ENCODE measurements at regions of chr9 and their contacts with region 1.

Region 1: GRCh38 chr9:27785714-27786100 is 212.4 kb upstream of the C9orf72 start:
- H3K4me3 Mint-ChIP-seq: no peak overlapping the region
- H3K27ac Mint-ChIP-seq: no peak overlapping the region
- H3K4me1 Mint-ChIP-seq: peaks cover 7% of the 10 kb centered on the region
- H3K27me3 Mint-ChIP-seq: peaks cover 11% of the 10 kb centered on the region

Region 2: DNA sequence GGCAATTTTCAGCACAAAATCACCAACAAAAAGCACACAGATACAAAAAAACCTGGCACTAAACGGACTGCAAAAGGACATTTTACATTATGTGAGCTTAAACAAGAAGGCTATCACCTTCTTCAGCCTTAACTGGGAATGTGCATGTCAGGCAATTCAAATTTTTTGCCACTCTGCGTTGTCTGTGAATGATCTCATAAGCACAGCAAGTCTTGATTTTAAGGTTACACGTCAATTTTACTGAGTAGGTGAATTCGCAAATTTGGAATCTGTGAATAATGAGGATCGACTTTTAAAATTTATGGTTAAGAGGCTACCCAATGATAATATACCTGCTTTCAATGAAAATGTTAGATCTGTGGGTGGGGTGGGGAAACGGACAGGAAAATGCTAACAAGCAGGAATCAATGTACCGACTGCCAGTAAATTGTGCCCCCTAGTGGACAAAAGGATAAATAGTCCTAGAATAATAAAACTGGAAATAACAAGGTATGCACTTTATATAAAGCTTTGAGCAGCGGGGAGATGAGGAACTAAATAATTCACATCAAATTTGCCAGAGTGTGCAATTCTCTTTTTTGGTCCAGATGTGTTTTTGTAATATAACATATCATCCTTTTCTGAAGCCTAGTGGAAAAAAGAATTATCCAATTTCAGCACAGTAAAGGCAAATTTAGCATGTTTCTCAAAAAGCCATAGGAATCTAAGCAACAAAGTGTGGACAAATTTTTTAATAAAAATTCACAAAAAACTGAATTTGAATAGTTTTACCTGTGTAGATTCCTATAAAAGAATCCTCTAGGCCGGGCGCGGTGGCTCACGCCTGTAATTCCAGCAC is 509.3 kb before region 1 on chr9:
- intact Hi-C with region 1: no loop called
- H3K4me3 Mint-ChIP-seq: no peak overlapping the region
- H3K27ac Mint-ChIP-seq: no peak overlapping the region
- H3K4me1 Mint-ChIP-seq: peaks cover 24% of the 10 kb centered on the region
- H3K27me3 Mint-ChIP-seq: no peaks in the 10 kb centered on the region

Region 3: DNA sequence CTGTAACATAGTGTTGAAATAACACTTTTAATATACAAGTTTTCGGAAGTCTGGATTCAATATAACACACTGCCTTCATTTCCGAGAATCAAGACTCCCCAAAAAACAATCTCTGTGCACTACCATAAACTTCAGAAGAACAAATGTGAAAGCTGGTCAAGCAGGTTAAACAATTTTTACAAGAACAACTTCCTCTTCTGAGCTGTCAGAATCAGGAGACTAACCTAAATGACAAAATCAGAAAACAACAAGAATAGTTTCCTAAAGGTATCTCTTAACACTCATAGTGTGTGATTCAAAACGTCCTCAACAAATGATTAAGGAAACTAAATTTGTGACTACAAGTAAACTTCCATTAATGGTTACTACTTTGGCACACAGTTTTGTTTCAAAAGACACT is 224.0 kb before region 1 on chr9:
- intact Hi-C with region 1: loop called (anchors 10 kb)
- H3K4me3 Mint-ChIP-seq: no peak overlapping the region
- H3K27ac Mint-ChIP-seq: peak overlapping the region; percentile 67
- H3K4me1 Mint-ChIP-seq: peaks cover 11% of the 10 kb centered on the region
- H3K27me3 Mint-ChIP-seq: no peaks in the 10 kb centered on the region

Region 4: GRCh38 chr9:27683181-27683580 is 102.5 kb before region 1 on chr9:
- intact Hi-C with region 1: no loop called
- H3K4me3 Mint-ChIP-seq: no peak overlapping the region
- H3K27ac Mint-ChIP-seq: no peak overlapping the region
- H3K4me1 Mint-ChIP-seq: peaks cover 10% of the 10 kb centered on the region
- H3K27me3 Mint-ChIP-seq: no peaks in the 10 kb centered on the region

Region 5: GRCh38 chr9:27990524-27990923 is 204.8 kb after region 1 on chr9:
- intact Hi-C with region 1: no loop called
- H3K4me3 Mint-ChIP-seq: no peak overlapping the region
- H3K27ac Mint-ChIP-seq: no peak overlapping the region
- H3K4me1 Mint-ChIP-seq: no peaks in the 10 kb centered on the region
- H3K27me3 Mint-ChIP-seq: no peaks in the 10 kb centered on the region

Measured in dendritic cell treated with granulocyte-macrophage colony-stimulating factor and Interleukin-4, amounts not matched to agents 40 ng/mL and 50 ng/mL, for 4 days (primary cell).